ENCODE measurements at regions of chr4 and their contacts with region 1.

Region 1: GRCh38 chr4:39977489-39978377 is at the start of gene PDS5A:
- DNase-seq: peak; percentile 81
- ATAC-seq: peak; percentile 86
- H3K4me3 ChIP-seq: peak within 1 kb of the TSS; percentile 98 to 99 (median 99)
- H3K27ac ChIP-seq: peak within 1 kb of the TSS; percentile 90
- H3K4me1 ChIP-seq: peaks cover 43% of the 10 kb centered on the region
- H3K27me3 ChIP-seq: no peaks in the 10 kb centered on the region; a peak in 1 of 5 replicates
- CTCF ChIP-seq: peak; percentile 83
- EP300 ChIP-seq: 0 out of 4 replicates have a peak, but pooled peaks of 1 of the 2 experiments have one; percentile 36
- POLR2A ChIP-seq: peak; percentile 39 to 70
- RAD21 ChIP-seq: peak; percentile 95
- total RNA-seq, gene PDS5A: 57.0 and 77.4 TPM in 2 replicates

Region 2: GRCh38 chr4:39697740-39698423 is 279.9 kb before region 1 on chr4 and contains the start of gene UBE2K:
- CTCF ChIA-PET with region 1: interaction called, 5 read pairs
- POLR2A ChIA-PET with region 1: interaction called, 3 read pairs
- in situ Hi-C with region 1: loop called (anchors 10 kb)
- intact Hi-C with region 1: loop called (anchors 1 kb)
- DNase-seq: peak; percentile 83
- ATAC-seq: peak; percentile 93
- H3K4me3 ChIP-seq: peak within 1 kb of the TSS; percentile 74 to 95 (median 79)
- H3K27ac ChIP-seq: peak within 1 kb of the TSS; percentile 96
- H3K4me1 ChIP-seq: peaks cover 18% of the 10 kb centered on the region
- H3K27me3 ChIP-seq: no peaks in the 10 kb centered on the region; a peak in 1 of 5 replicates
- CTCF ChIP-seq: no peak
- EP300 ChIP-seq: no peak; a peak in 1 of 4 replicates
- POLR2A ChIP-seq: peak; percentile 75 to 94
- RAD21 ChIP-seq: peak; percentile 49
- total RNA-seq, gene UBE2K: 36.2 and 72.9 TPM in 2 replicates

Region 3: GRCh38 chr4:39814403-39815185 is 163.1 kb before region 1 on chr4:
- CTCF ChIA-PET with region 1: no interaction called
- POLR2A ChIA-PET with region 1: no interaction called
- in situ Hi-C with region 1: no loop called
- intact Hi-C with region 1: loop called (anchors 10 kb)
- DNase-seq: peak; percentile 43
- ATAC-seq: no peak
- H3K4me3 ChIP-seq: peak overlapping the region; percentile 30 to 67 (median 44)
- H3K27ac ChIP-seq: peak overlapping the region; percentile 69
- H3K4me1 ChIP-seq: peaks cover 35% of the 10 kb centered on the region
- H3K27me3 ChIP-seq: no peaks in the 10 kb centered on the region
- CTCF ChIP-seq: no peak
- EP300 ChIP-seq: no peak
- POLR2A ChIP-seq: no peak
- RAD21 ChIP-seq: no peak

Region 4: GRCh38 chr4:39928538-39928937 is 49.2 kb before region 1 on chr4:
- CTCF ChIA-PET with region 1: no interaction called
- POLR2A ChIA-PET with region 1: interaction called, 4 read pairs
- in situ Hi-C with region 1: no loop called
- intact Hi-C with region 1: loop called (anchors 10 kb)
- DNase-seq: no peak
- ATAC-seq: no peak
- H3K4me3 ChIP-seq: no peak overlapping the region
- H3K27ac ChIP-seq: no peak overlapping the region
- H3K4me1 ChIP-seq: no peaks in the 10 kb centered on the region
- H3K27me3 ChIP-seq: no peaks in the 10 kb centered on the region
- CTCF ChIP-seq: no peak
- EP300 ChIP-seq: no peak
- POLR2A ChIP-seq: no peak
- RAD21 ChIP-seq: no peak

Region 5: GRCh38 chr4:40020221-40020943 is 42.6 kb after region 1 on chr4:
- CTCF ChIA-PET with region 1: no interaction called
- POLR2A ChIA-PET with region 1: no interaction called
- in situ Hi-C with region 1: no loop called
- intact Hi-C with region 1: no loop called
- DNase-seq: no peak
- ATAC-seq: no peak
- H3K4me3 ChIP-seq: no peak overlapping the region
- H3K27ac ChIP-seq: no peak overlapping the region
- H3K4me1 ChIP-seq: no peaks in the 10 kb centered on the region
- H3K27me3 ChIP-seq: no peaks in the 10 kb centered on the region
- CTCF ChIP-seq: no peak
- EP300 ChIP-seq: no peak
- POLR2A ChIP-seq: no peak
- RAD21 ChIP-seq: no peak